Heart left ventricle (tissue), 16 donors: ENCODE measurements at regions of chr5 and their contacts with region 1.

Region 1: DNA sequence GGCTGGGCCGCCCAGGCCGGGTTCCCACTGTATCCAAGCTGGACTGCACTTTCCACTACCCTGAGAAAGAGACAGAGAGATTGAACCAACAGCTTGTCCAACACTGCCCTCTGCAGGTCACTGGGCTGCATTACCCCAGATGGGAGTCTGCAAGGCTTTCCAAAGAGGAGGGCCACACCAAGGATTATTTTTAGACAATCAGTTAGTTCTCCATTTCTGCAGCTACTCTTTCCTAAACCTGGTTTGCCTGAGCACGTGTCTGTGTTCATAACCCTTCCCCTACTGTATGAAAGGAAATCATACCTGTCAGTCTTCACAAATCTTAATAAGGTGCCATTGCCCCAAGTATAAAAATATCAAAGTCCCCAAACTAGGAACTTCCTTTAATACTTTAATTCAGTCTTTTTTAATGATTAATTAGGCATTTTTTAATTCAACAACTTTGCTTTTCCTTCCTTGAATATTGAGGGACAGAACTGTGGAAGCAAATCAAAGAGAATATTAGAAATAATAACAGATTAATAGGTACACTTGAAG is 13.4 kb upstream of the FGF1 start:
- DNase-seq: peak; percentile 89 to 92 (median 90)
- ATAC-seq: peak; percentile 80 to 89 (median 86)
- H3K4me3 ChIP-seq: no peak overlapping the region
- H3K27ac ChIP-seq: peak overlapping the region; percentile 79 to 96 (median 88)
- H3K4me1 ChIP-seq: peaks cover 7 to 51% (median 30%) of the 10 kb centered on the region in 12 donors
- H3K27me3 ChIP-seq: no peaks in the 10 kb centered on the region
- CTCF ChIP-seq: peak; percentile 95 to 99 (median 98)
- POLR2A ChIP-seq: no peak

Region 2: DNA sequence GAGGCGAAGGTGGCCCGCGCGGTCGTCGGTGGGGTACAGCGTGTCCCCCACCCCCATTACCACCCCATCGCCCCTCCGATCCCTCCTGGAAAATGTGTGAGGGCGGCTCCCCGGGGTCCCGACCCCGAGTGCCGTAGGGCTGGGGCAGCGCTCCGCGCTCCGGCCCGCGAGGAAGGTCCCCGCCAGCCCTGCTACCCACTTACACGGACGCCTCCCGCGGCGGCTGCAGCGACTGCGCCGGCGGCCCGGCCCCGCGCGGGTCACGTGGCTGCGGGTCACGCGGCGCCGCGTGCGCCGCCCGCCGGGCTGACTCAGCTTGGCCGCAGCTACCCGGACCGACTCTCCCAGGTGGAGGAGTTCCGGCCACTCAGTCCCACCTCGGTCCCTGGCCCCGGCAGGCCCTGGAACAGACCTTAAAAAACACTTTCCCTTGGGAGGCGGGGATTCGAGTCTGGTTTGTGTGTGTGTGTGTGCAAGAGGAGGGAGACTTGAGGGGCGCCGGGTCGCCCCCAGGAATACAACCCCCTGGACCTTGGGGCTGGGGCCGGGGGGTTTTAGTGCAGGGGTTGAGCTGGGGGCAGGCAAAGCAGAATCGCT is 686.4 kb before region 1 on chr5 and contains the start of gene GNPDA1:
- intact Hi-C with region 1: loop called in 1 of 10 experiments (anchors 10 kb)
- DNase-seq: peak; percentile 85 to 90 (median 88)
- ATAC-seq: peak; percentile 74 to 94 (median 90)
- H3K4me3 ChIP-seq: peak within 1 kb of the TSS; percentile 42 to 98 (median 78)
- H3K27ac ChIP-seq: peak within 1 kb of the TSS; percentile 47 to 94 (median 85)
- H3K4me1 ChIP-seq: peaks cover 0 to 53% (median 15%) of the 10 kb centered on the region in 12 donors
- H3K27me3 ChIP-seq: no peaks in the 10 kb centered on the region
- CTCF ChIP-seq: peak in 5 of 12 donors; percentile 8 to 39 (median 31)
- POLR2A ChIP-seq: peak in 1 of 2 donors; percentile 39
- total RNA-seq, gene GNPDA1: 14.1 to 43.0 (median 26.1) TPM

Region 3: DNA sequence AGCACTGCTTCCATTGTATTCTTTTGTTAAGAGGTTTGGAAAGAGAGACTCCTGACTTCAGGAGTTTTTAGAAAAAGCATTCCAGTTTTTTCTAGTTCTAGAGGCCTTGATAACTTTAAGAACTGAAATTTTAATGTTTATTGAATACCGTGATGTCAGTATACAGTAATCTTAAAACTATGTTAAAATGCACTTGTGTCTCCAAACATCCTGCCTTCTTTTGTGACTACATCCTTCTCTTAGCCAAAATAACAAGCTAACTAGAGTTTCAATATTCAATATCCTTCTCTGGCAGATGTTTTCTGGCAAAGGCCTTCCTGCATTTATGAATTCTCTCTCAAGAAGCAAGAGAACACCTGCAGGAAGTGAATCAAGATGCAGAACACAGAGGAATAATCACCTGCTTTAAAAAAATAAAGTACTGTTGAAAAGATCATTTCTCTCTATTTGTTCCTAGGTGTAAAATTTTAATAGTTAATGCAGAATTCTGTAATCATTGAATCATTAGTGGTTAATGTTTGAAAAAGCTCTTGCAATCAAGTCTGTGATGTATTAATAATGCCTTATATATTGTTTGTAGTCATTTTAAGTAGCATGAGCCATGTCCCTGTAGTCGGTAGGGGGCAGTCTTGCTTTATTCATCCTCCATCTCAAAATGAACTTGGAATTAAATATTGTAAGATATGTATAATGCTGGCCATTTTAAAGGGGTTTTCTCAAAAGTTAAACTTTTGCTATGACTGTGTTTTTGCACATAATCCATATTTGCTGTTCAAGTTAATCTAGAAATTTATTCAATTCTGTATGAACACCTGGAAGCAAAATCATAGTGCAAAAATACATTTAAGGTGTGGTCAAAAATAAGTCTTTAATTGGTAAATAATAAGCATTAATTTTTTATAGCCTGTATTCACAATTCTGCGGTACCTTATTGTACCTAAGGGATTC is 547.5 kb before region 1 on chr5:
- intact Hi-C with region 1: loop called in 9 of 10 experiments (anchors 2 to 10 kb)
- DNase-seq: peak in 3 of 5 donors; percentile 41 to 63 (median 52)
- ATAC-seq: peak in 3 of 4 donors; percentile 65 to 70 (median 66)
- H3K4me3 ChIP-seq: no peak overlapping the region
- H3K27ac ChIP-seq: peak overlapping the region in 1 of 12 donors; percentile 14
- H3K4me1 ChIP-seq: peaks cover 0 to 10% (median 3%) of the 10 kb centered on the region in 12 donors
- H3K27me3 ChIP-seq: no peaks in the 10 kb centered on the region
- CTCF ChIP-seq: peak; percentile 82 to 95 (median 88)
- POLR2A ChIP-seq: no peak

Region 4: DNA sequence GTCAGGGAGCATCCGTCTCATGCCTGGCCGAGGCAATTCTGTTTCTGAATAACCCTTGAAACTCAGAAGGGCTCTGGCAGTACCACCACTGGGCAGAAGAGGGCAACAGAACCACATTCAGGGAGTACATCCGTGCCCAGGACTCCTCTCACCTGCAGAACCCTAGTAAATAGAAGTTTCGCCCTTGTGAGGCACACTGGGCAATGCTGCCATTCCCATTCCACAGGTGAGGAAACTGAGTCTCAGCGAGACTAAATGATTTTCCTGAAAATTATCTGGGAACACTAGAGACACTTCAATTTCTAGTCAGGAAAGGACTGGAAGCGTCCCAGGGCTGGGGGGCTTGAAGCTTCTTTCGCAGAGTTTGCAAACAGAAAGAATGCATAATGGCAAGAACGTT is 88.1 kb before region 1 on chr5:
- intact Hi-C with region 1: loop called (anchors 1 to 5 kb)
- DNase-seq: peak; percentile 65 to 72 (median 69)
- ATAC-seq: peak; percentile 60 to 87 (median 84)
- H3K4me3 ChIP-seq: no peak overlapping the region
- H3K27ac ChIP-seq: peak overlapping the region in 1 of 12 donors; percentile 29
- H3K4me1 ChIP-seq: peaks cover 0 to 27% (median 6%) of the 10 kb centered on the region in 12 donors
- H3K27me3 ChIP-seq: no peaks in the 10 kb centered on the region
- CTCF ChIP-seq: peak; percentile 83 to 95 (median 93)
- POLR2A ChIP-seq: no peak

Region 5: DNA sequence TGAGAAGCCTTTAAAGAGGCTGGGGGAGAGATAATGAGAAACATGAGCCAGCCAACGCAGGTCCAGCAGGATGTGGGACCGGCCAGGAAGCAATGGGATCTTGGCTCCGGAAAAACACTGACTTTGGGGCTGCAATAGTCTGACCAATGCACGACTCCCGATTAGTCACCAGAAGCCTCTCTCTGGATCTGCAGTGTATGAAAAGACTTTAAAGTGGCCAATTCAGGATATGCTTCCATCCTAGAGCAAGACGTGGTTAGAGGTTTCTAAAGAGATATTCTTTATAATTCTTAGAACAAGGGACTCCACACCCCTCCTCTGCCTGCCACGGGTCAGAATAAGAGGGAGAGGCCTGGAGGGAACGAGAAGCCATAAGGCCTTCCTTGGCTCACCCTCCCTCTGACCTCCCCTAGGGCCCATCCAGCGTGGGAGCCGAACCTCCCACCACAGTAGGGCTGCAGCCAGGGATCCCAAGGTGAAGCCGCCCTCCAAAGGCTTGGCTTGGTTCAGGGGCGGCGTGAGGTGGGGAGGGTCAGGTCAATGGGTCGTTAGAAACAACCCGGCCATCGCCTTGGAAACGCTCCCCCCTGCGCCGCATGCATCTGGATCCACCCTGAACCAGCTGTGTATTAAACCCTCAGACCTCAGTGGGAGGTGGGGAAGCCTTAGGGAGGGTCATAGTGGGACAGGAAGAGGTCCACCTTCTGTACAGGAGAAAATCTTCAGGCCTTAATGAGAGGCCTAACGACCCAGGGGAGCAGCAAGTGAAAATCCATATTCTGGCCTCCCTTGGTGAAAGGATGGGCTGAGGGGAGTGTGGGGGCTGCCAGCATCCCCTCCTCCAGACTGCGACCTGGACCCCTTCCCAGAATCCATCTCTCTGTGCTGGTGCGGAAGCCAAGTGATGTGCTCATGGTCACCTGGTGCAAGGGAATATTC is 24.5 kb before region 1 on chr5:
- intact Hi-C with region 1: no loop called
- DNase-seq: peak in 4 of 5 donors; percentile 48 to 70 (median 62)
- ATAC-seq: peak; percentile 56 to 86 (median 80)
- H3K4me3 ChIP-seq: no peak overlapping the region
- H3K27ac ChIP-seq: peak overlapping the region in 11 of 12 donors; percentile 52 to 85 (median 73)
- H3K4me1 ChIP-seq: peaks cover 0 to 52% (median 29%) of the 10 kb centered on the region in 12 donors
- H3K27me3 ChIP-seq: no peaks in the 10 kb centered on the region
- CTCF ChIP-seq: no peak
- POLR2A ChIP-seq: no peak

Region 6: GRCh38 chr5:142713121-142713706 is 14.0 kb after region 1 on chr5:
- intact Hi-C with region 1: no loop called
- DNase-seq: peak; percentile 88 to 94 (median 91)
- ATAC-seq: peak; percentile 60 to 88 (median 86)
- H3K4me3 ChIP-seq: peak overlapping the region in 11 of 12 donors; percentile 31 to 63 (median 56)
- H3K27ac ChIP-seq: peak overlapping the region; percentile 63 to 96 (median 88)
- H3K4me1 ChIP-seq: peaks cover 0 to 46% (median 25%) of the 10 kb centered on the region in 12 donors
- H3K27me3 ChIP-seq: no peaks in the 10 kb centered on the region
- CTCF ChIP-seq: peak; percentile 91 to 99 (median 97)
- POLR2A ChIP-seq: peak in 1 of 2 donors; percentile 27

Region 7: GRCh38 chr5:142821733-142822487 is 122.7 kb after region 1 on chr5:
- intact Hi-C with region 1: no loop called
- DNase-seq: no peak
- ATAC-seq: peak in 2 of 4 donors; percentile 24 to 25
- H3K4me3 ChIP-seq: no peak overlapping the region
- H3K27ac ChIP-seq: peak overlapping the region in 1 of 12 donors; percentile 65
- H3K4me1 ChIP-seq: peaks cover 3 to 89% (median 66%) of the 10 kb centered on the region in 12 donors
- H3K27me3 ChIP-seq: no peaks in the 10 kb centered on the region
- CTCF ChIP-seq: no peak
- POLR2A ChIP-seq: no peak